ENCODE measurements at regions of chr18 and their contacts with region 1.

Region 1: GRCh38 chr18:63963615-63964256 is 6.1 kb upstream of the SERPINB8 start:
- DNase-seq: peak; percentile 70
- H3K4me3 Mint-ChIP-seq: no peak overlapping the region
- H3K27ac Mint-ChIP-seq: no peak overlapping the region
- H3K4me1 Mint-ChIP-seq: peaks cover 16% of the 10 kb centered on the region
- H3K27me3 Mint-ChIP-seq: peaks cover 11% of the 10 kb centered on the region

Region 2: GRCh38 chr18:63986885-63987284 is 23.1 kb after region 1 on chr18:
- CTCF ChIA-PET with region 1: interaction called, 11 read pairs
- intact Hi-C with region 1: no loop called
- DNase-seq: no peak
- H3K4me3 Mint-ChIP-seq: no peak overlapping the region
- H3K27ac Mint-ChIP-seq: no peak overlapping the region
- H3K4me1 Mint-ChIP-seq: no peaks in the 10 kb centered on the region
- H3K27me3 Mint-ChIP-seq: no peaks in the 10 kb centered on the region

Region 3: DNA sequence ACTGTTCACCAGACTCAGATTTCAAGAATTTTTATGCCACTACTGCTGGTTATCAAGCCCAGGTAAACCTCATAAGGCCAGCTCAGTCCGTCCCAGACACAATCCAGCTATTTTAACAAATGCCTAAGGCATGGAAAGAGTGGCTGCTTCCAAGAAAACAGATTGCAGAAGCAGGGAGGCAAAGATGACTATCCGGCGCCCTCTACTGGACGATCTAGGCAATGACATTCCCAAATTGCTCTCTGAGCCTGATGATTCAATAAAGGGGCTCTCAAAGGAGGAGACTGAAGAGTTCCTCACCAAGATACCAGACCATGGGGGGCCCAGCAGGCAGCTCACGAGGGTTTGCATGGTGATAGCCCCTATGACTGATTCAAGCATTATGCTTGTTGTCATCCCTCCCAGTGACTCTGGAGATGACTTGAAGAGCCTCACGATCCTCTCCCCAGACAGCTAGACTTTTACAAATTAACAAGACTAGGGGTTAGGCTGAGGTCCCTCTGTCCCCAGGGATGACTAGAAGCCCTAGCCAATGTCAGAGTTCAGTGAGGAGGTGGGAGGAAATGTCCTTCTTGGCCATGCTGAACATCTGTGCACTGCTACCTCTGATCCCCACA is 31.2 kb after region 1 on chr18:
- CTCF ChIA-PET with region 1: interaction called, 8 read pairs
- intact Hi-C with region 1: loop called (anchors 1 kb)
- DNase-seq: peak; percentile 61
- H3K4me3 Mint-ChIP-seq: no peak overlapping the region
- H3K27ac Mint-ChIP-seq: no peak overlapping the region
- H3K4me1 Mint-ChIP-seq: peaks cover 5% of the 10 kb centered on the region
- H3K27me3 Mint-ChIP-seq: no peaks in the 10 kb centered on the region